AG04449 (cell line): ENCODE measurements at regions of chr2 and their contacts with region 1.

Region 1: GRCh38 chr2:119174216-119175037 is 15.9 kb upstream of the C1QL2 start:
- DNase-seq: no peak
- H3K4me3 ChIP-seq: no peak overlapping the region
- CTCF ChIP-seq: peak; percentile 80

Region 2: GRCh38 chr2:119192893-119193292 is 18.5 kb after region 1 on chr2:
- CTCF ChIA-PET with region 1: interaction called, 13 read pairs
- POLR2A ChIA-PET with region 1: no interaction called
- DNase-seq: no peak
- H3K4me3 ChIP-seq: no peak overlapping the region
- CTCF ChIP-seq: no peak

Region 3: GRCh38 chr2:119255760-119256581 is 81.5 kb after region 1 on chr2:
- CTCF ChIA-PET with region 1: no interaction called
- POLR2A ChIA-PET with region 1: no interaction called
- DNase-seq: peak; percentile 92
- H3K4me3 ChIP-seq: no peak overlapping the region
- CTCF ChIP-seq: no peak